CD4-positive, alpha-beta T cell (primary cell): ENCODE measurements at regions of chr6 and their contacts with region 1.

Region 1: GRCh38 chr6:28725890-28726348 is 197.9 kb downstream of the TRIM27 start:
- DNase-seq: no peak
- ATAC-seq: no peak
- H3K4me3 ChIP-seq: no peak overlapping the region
- H3K4me3 Mint-ChIP-seq: no peak overlapping the region
- H3K27ac ChIP-seq: no peak overlapping the region
- H3K27ac Mint-ChIP-seq: no peak overlapping the region
- H3K4me1 ChIP-seq: peaks cover 9% of the 10 kb centered on the region
- H3K4me1 Mint-ChIP-seq: peaks cover 22% of the 10 kb centered on the region
- H3K27me3 ChIP-seq: peaks cover 36 to 73% of the 10 kb centered on the region in 2 experiments
- H3K27me3 Mint-ChIP-seq: peaks cover 98% of the 10 kb centered on the region
- CTCF ChIP-seq: no peak

Region 2: GRCh38 chr6:27687154-27688013 is 1038.5 kb before region 1 on chr6:
- CTCF ChIA-PET with region 1: no interaction called
- POLR2A ChIA-PET with region 1: no interaction called
- intact Hi-C with region 1: loop called in 1 of 2 experiments (anchors 10 kb)
- DNase-seq: peak; percentile 53 to 87 (median 68)
- ATAC-seq: peak; percentile 74
- H3K4me3 ChIP-seq: peak overlapping the region; percentile 88
- H3K4me3 Mint-ChIP-seq: peak overlapping the region; percentile 95
- H3K27ac ChIP-seq: peak overlapping the region in 1 of 2 donors; percentile 37
- H3K27ac Mint-ChIP-seq: peak overlapping the region; percentile 97
- H3K4me1 ChIP-seq: peaks cover 14% of the 10 kb centered on the region
- H3K4me1 Mint-ChIP-seq: peaks cover 38% of the 10 kb centered on the region
- H3K27me3 ChIP-seq: peaks cover 5 to 9% of the 10 kb centered on the region in 2 experiments
- H3K27me3 Mint-ChIP-seq: peaks cover 40% of the 10 kb centered on the region
- CTCF ChIP-seq: peak; percentile 66

Region 3: GRCh38 chr6:28303570-28303969 is 422.3 kb before region 1 on chr6:
- CTCF ChIA-PET with region 1: no interaction called
- POLR2A ChIA-PET with region 1: no interaction called
- intact Hi-C with region 1: no loop called
- DNase-seq: peak in 1 of 14 experiments; percentile 15
- ATAC-seq: no peak
- H3K4me3 ChIP-seq: no peak overlapping the region
- H3K4me3 Mint-ChIP-seq: no peak overlapping the region
- H3K27ac ChIP-seq: no peak overlapping the region
- H3K27ac Mint-ChIP-seq: no peak overlapping the region
- H3K4me1 ChIP-seq: peaks cover 4% of the 10 kb centered on the region
- H3K4me1 Mint-ChIP-seq: peaks cover 8% of the 10 kb centered on the region
- H3K27me3 ChIP-seq: no peaks in the 10 kb centered on the region
- H3K27me3 Mint-ChIP-seq: no peaks in the 10 kb centered on the region
- CTCF ChIP-seq: no peak

Region 4: GRCh38 chr6:28597217-28598005 is 128.5 kb before region 1 on chr6:
- CTCF ChIA-PET with region 1: no interaction called
- POLR2A ChIA-PET with region 1: no interaction called
- intact Hi-C with region 1: no loop called
- DNase-seq: peak in 3 of 14 experiments; percentile 8 to 26 (median 19)
- ATAC-seq: no peak
- H3K4me3 ChIP-seq: no peak overlapping the region
- H3K4me3 Mint-ChIP-seq: no peak overlapping the region
- H3K27ac ChIP-seq: no peak overlapping the region
- H3K27ac Mint-ChIP-seq: no peak overlapping the region
- H3K4me1 ChIP-seq: no peaks in the 10 kb centered on the region
- H3K4me1 Mint-ChIP-seq: peaks cover 6% of the 10 kb centered on the region
- H3K27me3 ChIP-seq: peaks cover 15 to 40% of the 10 kb centered on the region in 2 experiments
- H3K27me3 Mint-ChIP-seq: peaks cover 64% of the 10 kb centered on the region
- CTCF ChIP-seq: no peak

Region 5: GRCh38 chr6:28683944-28684538 is 41.9 kb before region 1 on chr6:
- CTCF ChIA-PET with region 1: no interaction called
- POLR2A ChIA-PET with region 1: no interaction called
- intact Hi-C with region 1: no loop called
- DNase-seq: peak in 6 of 14 experiments; percentile 0 to 65 (median 33)
- ATAC-seq: peak; percentile 69
- H3K4me3 ChIP-seq: no peak overlapping the region
- H3K4me3 Mint-ChIP-seq: no peak overlapping the region
- H3K27ac ChIP-seq: no peak overlapping the region
- H3K27ac Mint-ChIP-seq: no peak overlapping the region
- H3K4me1 ChIP-seq: peaks cover 4% of the 10 kb centered on the region
- H3K4me1 Mint-ChIP-seq: peaks cover 12% of the 10 kb centered on the region
- H3K27me3 ChIP-seq: peaks cover 21 to 48% of the 10 kb centered on the region in 2 experiments
- H3K27me3 Mint-ChIP-seq: peaks cover 87% of the 10 kb centered on the region
- CTCF ChIP-seq: peak; percentile 65

Region 6: GRCh38 chr6:28758046-28758817 is 32.3 kb after region 1 on chr6:
- CTCF ChIA-PET with region 1: no interaction called
- POLR2A ChIA-PET with region 1: no interaction called
- intact Hi-C with region 1: no loop called
- DNase-seq: no peak
- ATAC-seq: no peak
- H3K4me3 ChIP-seq: no peak overlapping the region
- H3K4me3 Mint-ChIP-seq: no peak overlapping the region
- H3K27ac ChIP-seq: no peak overlapping the region
- H3K27ac Mint-ChIP-seq: no peak overlapping the region
- H3K4me1 ChIP-seq: no peaks in the 10 kb centered on the region
- H3K4me1 Mint-ChIP-seq: no peaks in the 10 kb centered on the region
- H3K27me3 ChIP-seq: peaks cover 17 to 52% of the 10 kb centered on the region in 2 experiments
- H3K27me3 Mint-ChIP-seq: peaks cover 77% of the 10 kb centered on the region
- CTCF ChIP-seq: no peak

Region 7: GRCh38 chr6:28789553-28790083 is 63.7 kb after region 1 on chr6:
- CTCF ChIA-PET with region 1: no interaction called
- POLR2A ChIA-PET with region 1: no interaction called
- intact Hi-C with region 1: loop called in 1 of 2 experiments (anchors 10 kb)
- DNase-seq: no peak
- ATAC-seq: no peak
- H3K4me3 ChIP-seq: no peak overlapping the region
- H3K4me3 Mint-ChIP-seq: no peak overlapping the region
- H3K27ac ChIP-seq: no peak overlapping the region
- H3K27ac Mint-ChIP-seq: no peak overlapping the region
- H3K4me1 ChIP-seq: peaks cover 3% of the 10 kb centered on the region
- H3K4me1 Mint-ChIP-seq: peaks cover 13% of the 10 kb centered on the region
- H3K27me3 ChIP-seq: peaks cover 91 to 98% of the 10 kb centered on the region in 2 experiments
- H3K27me3 Mint-ChIP-seq: peaks cover 99% of the 10 kb centered on the region
- CTCF ChIP-seq: no peak